Prostate gland (tissue), 2 donors: ENCODE measurements at regions of chr7 and their contacts with region 1.

Region 1: GRCh38 chr7:131107337-131108211 is 220.1 kb upstream of the MKLN1 start:
- DNase-seq: peak; percentile 88
- H3K4me3 ChIP-seq: peak overlapping the region; percentile 99 to 100
- H3K27ac ChIP-seq: peak overlapping the region; percentile 99 to 100
- H3K4me1 ChIP-seq: no peaks in the 10 kb centered on the region
- H3K27me3 ChIP-seq: no peaks in the 10 kb centered on the region
- CTCF ChIP-seq: peak in 2 of 4 experiments; percentile 12 to 13
- POLR2A ChIP-seq: peak; percentile 93

Region 2: GRCh38 chr7:131068604-131069021 is 39.0 kb before region 1 on chr7:
- intact Hi-C with region 1: loop called (anchors 5 kb)
- DNase-seq: no peak
- H3K4me3 ChIP-seq: no peak overlapping the region
- H3K27ac ChIP-seq: peak overlapping the region; percentile 38 to 60
- H3K4me1 ChIP-seq: no peaks in the 10 kb centered on the region
- H3K27me3 ChIP-seq: no peaks in the 10 kb centered on the region
- CTCF ChIP-seq: peak in 2 of 4 experiments; percentile 40
- POLR2A ChIP-seq: no peak

Region 3: GRCh38 chr7:131188367-131189339 is 81.1 kb after region 1 on chr7:
- intact Hi-C with region 1: loop called (anchors 5 kb)
- DNase-seq: no peak
- H3K4me3 ChIP-seq: no peak overlapping the region
- H3K27ac ChIP-seq: no peak overlapping the region
- H3K4me1 ChIP-seq: no peaks in the 10 kb centered on the region
- H3K27me3 ChIP-seq: no peaks in the 10 kb centered on the region
- CTCF ChIP-seq: no peak
- POLR2A ChIP-seq: no peak

Region 4: GRCh38 chr7:131302876-131303707 is 195.5 kb after region 1 on chr7:
- intact Hi-C with region 1: loop called (anchors 5 kb)
- DNase-seq: peak; percentile 57
- H3K4me3 ChIP-seq: no peak overlapping the region
- H3K27ac ChIP-seq: peak overlapping the region; percentile 33 to 44
- H3K4me1 ChIP-seq: peaks cover 4% of the 10 kb centered on the region
- H3K27me3 ChIP-seq: no peaks in the 10 kb centered on the region
- CTCF ChIP-seq: peak; percentile 40 to 68 (median 60)
- POLR2A ChIP-seq: no peak

Region 5: DNA sequence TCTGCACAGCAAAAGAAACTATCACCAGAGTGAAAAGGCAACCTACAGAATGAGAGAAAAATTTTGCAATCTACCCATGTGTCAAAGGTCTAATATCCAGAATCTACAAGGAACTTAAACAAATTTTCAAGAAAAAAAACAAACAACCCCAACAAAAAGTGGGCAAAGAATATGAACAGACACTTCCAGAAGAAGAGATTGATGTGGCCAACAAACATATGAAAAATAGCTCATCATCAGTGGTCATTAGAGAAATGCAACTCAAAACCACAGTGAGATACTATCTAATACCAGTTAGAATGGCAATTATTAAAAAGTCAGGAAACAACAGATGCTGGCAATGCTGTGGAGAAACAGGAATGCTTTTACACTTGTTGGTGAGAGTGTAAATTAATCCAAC is 213.0 kb after region 1 on chr7:
- intact Hi-C with region 1: no loop called
- DNase-seq: no peak
- H3K4me3 ChIP-seq: no peak overlapping the region
- H3K27ac ChIP-seq: no peak overlapping the region
- H3K4me1 ChIP-seq: no peaks in the 10 kb centered on the region
- H3K27me3 ChIP-seq: no peaks in the 10 kb centered on the region
- CTCF ChIP-seq: no peak
- POLR2A ChIP-seq: no peak

Region 6: GRCh38 chr7:131507592-131508331 is 400.2 kb after region 1 on chr7:
- intact Hi-C with region 1: loop called (anchors 10 kb)
- DNase-seq: peak; percentile 80
- H3K4me3 ChIP-seq: no peak overlapping the region
- H3K27ac ChIP-seq: no peak overlapping the region
- H3K4me1 ChIP-seq: no peaks in the 10 kb centered on the region
- H3K27me3 ChIP-seq: no peaks in the 10 kb centered on the region
- CTCF ChIP-seq: peak; percentile 87 to 89 (median 88)
- POLR2A ChIP-seq: no peak